Breast epithelium (tissue), 4 donors: ENCODE measurements at regions of chr12 and their contacts with region 1.

Region 1: DNA sequence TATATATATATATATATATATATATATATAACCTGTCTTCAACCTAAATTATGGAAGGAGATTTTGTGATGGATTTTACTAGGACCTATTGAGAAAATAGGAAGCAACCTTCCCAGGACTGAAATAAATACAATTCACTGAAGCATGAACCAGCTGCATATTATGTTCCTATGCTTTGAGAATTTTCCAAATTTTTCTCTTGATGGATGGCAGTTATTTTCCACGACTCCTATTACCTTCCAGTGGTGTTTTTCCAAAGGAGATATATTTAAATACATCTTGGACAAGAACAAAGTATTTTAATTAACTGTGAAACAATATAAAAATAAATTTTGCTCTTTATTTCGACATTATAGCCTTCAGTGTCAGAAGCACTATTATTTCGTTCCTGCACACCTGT is 87.9 kb downstream of the TMTC1 start:
- DNase-seq: no peak
- H3K4me3 ChIP-seq: no peak overlapping the region
- H3K27ac ChIP-seq: no peak overlapping the region
- H3K4me1 ChIP-seq: no peaks in the 10 kb centered on the region
- H3K27me3 ChIP-seq: no peaks in the 10 kb centered on the region
- CTCF ChIP-seq: no peak
- POLR2A ChIP-seq: no peak

Region 2: GRCh38 chr12:29012673-29013072 is 683.1 kb before region 1 on chr12:
- intact Hi-C with region 1: no loop called
- DNase-seq: no peak
- H3K4me3 ChIP-seq: no peak overlapping the region
- H3K27ac ChIP-seq: no peak overlapping the region
- H3K4me1 ChIP-seq: no peaks in the 10 kb centered on the region
- H3K27me3 ChIP-seq: no peaks in the 10 kb centered on the region
- CTCF ChIP-seq: no peak
- POLR2A ChIP-seq: no peak

Region 3: DNA sequence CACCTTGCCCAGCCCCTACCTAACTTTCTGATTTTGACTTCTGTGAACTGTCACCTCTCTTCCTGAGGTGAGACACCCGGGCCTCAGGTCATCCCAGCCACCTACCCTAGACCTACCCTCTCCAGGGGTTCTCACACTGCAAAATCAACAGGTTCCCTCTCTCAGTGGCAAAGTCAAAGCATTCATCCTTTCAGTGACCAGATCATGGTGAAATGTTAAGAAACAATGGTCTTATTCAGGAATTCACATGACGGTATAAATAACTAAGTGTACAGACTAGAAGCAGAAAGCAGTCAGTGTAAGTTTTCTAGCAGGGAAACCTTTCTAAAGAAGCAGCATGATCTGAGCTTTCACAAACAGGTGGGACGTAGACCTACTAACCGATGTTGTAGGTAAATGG is 45.4 kb before region 1 on chr12:
- intact Hi-C with region 1: loop called (anchors 2 kb)
- DNase-seq: no peak
- H3K4me3 ChIP-seq: no peak overlapping the region
- H3K27ac ChIP-seq: no peak overlapping the region
- H3K4me1 ChIP-seq: no peaks in the 10 kb centered on the region
- H3K27me3 ChIP-seq: no peaks in the 10 kb centered on the region
- CTCF ChIP-seq: no peak
- POLR2A ChIP-seq: no peak

Region 4: GRCh38 chr12:30732954-30733637 is 1037.3 kb after region 1 on chr12:
- intact Hi-C with region 1: no loop called
- DNase-seq: no peak
- H3K4me3 ChIP-seq: no peak overlapping the region
- H3K27ac ChIP-seq: no peak overlapping the region
- H3K4me1 ChIP-seq: no peaks in the 10 kb centered on the region
- H3K27me3 ChIP-seq: no peaks in the 10 kb centered on the region
- CTCF ChIP-seq: no peak
- POLR2A ChIP-seq: no peak